T-cell (primary cell): ENCODE measurements at regions of chr10 and their contacts with region 1.

Region 1: GRCh38 chr10:89643431-89644331 is 1.4 kb downstream of the PANK1 start:
- DNase-seq: peak; percentile 12 to 84 (median 47)
- ATAC-seq: peak; percentile 82 to 88 (median 85)
- H3K4me3 ChIP-seq: peak overlapping the region; percentile 51 to 89
- H3K4me3 Mint-ChIP-seq: no peak overlapping the region
- H3K27ac ChIP-seq: no peak overlapping the region
- H3K27ac Mint-ChIP-seq: no peak overlapping the region
- H3K4me1 ChIP-seq: peaks cover 4 to 10% of the 10 kb centered on the region in 2 experiments
- H3K4me1 Mint-ChIP-seq: peaks cover 7 to 11% (median 9%) of the 10 kb centered on the region in 3 donors
- H3K27me3 ChIP-seq: no peaks in the 10 kb centered on the region
- H3K27me3 Mint-ChIP-seq: peaks cover 3 to 8% of the 10 kb centered on the region in 2 donors

Region 2: GRCh38 chr10:89701238-89702120 is 57.8 kb after region 1 on chr10 and contains the start of gene KIF20B:
- CTCF ChIA-PET with region 1: interaction called in 1 of 2 experiments, 6 read pairs
- POLR2A ChIA-PET with region 1: interaction called, 6 to 11 read pairs
- DNase-seq: peak; percentile 86 to 97 (median 95)
- ATAC-seq: peak; percentile 97 to 99 (median 98)
- H3K4me3 ChIP-seq: peak within 1 kb of the TSS; percentile 77 to 90
- H3K4me3 Mint-ChIP-seq: peak within 1 kb of the TSS; percentile 90 to 97 (median 94)
- H3K27ac ChIP-seq: peak within 1 kb of the TSS; percentile 77
- H3K27ac Mint-ChIP-seq: peak within 1 kb of the TSS; percentile 91 to 98
- H3K4me1 ChIP-seq: peaks cover 7% of the 10 kb centered on the region in 2 experiments
- H3K4me1 Mint-ChIP-seq: peaks cover 34 to 55% (median 45%) of the 10 kb centered on the region in 3 donors
- H3K27me3 ChIP-seq: no peaks in the 10 kb centered on the region
- H3K27me3 Mint-ChIP-seq: no peaks in the 10 kb centered on the region
- total RNA-seq, gene KIF20B: 17.6 to 21.5 (median 20.1) TPM

Region 3: DNA sequence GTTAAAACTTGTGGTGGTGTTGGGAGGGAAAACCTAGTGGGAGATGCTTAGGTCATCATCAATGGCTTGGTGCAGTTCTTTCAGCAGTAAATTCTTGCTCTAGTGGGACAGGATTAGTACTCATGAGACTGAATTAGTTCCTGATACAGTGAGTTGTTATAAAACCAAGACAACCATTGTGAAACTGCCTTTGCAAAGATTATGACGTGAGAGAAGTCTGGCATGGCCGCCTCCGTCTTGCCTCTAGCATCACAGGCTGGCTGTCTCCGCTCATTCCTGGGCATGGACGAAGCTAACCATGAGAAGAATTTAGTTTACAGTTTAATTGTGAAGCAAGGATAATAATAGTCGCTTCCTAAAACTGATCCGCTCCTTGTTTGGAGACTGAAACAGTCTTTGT is 244.1 kb after region 1 on chr10:
- CTCF ChIA-PET with region 1: no interaction called
- POLR2A ChIA-PET with region 1: no interaction called
- DNase-seq: peak in 1 of 35 experiments; percentile 5
- ATAC-seq: no peak
- H3K4me3 ChIP-seq: no peak overlapping the region
- H3K4me3 Mint-ChIP-seq: no peak overlapping the region
- H3K27ac ChIP-seq: no peak overlapping the region
- H3K27ac Mint-ChIP-seq: no peak overlapping the region
- H3K4me1 ChIP-seq: no peaks in the 10 kb centered on the region
- H3K4me1 Mint-ChIP-seq: peaks cover 0 to 7% (median 0%) of the 10 kb centered on the region in 3 donors
- H3K27me3 ChIP-seq: peaks cover 0 to 2% of the 10 kb centered on the region in 2 experiments
- H3K27me3 Mint-ChIP-seq: peaks cover 8 to 20% of the 10 kb centered on the region in 2 donors